PC-9 (cell line): ENCODE measurements at regions of chr17 and their contacts with region 1.

Region 1: GRCh38 chr17:44775136-44775837 is 16.5 kb downstream of the ADAM11 start:
- DNase-seq: peak in 1 of 2 experiments; percentile 95
- H3K4me3 ChIP-seq: peak overlapping the region; percentile 81
- H3K27ac ChIP-seq: no peak overlapping the region
- H3K4me1 ChIP-seq: peaks cover 8% of the 10 kb centered on the region; the same call in 1 of the 2 replicates
- H3K27me3 ChIP-seq: no peaks in the 10 kb centered on the region
- CTCF ChIP-seq: peak; percentile 21; the same call in 1 of the 2 replicates

Region 2: GRCh38 chr17:44417553-44417952 is 357.7 kb before region 1 on chr17:
- CTCF ChIA-PET with region 1: no interaction called
- POLR2A ChIA-PET with region 1: no interaction called
- intact Hi-C with region 1: no loop called
- DNase-seq: peak; percentile 34 to 86
- H3K4me3 ChIP-seq: no peak overlapping the region
- H3K27ac ChIP-seq: peak overlapping the region; percentile 71
- H3K4me1 ChIP-seq: peaks cover 16% of the 10 kb centered on the region
- H3K27me3 ChIP-seq: no peaks in the 10 kb centered on the region
- CTCF ChIP-seq: no peak

Region 3: DNA sequence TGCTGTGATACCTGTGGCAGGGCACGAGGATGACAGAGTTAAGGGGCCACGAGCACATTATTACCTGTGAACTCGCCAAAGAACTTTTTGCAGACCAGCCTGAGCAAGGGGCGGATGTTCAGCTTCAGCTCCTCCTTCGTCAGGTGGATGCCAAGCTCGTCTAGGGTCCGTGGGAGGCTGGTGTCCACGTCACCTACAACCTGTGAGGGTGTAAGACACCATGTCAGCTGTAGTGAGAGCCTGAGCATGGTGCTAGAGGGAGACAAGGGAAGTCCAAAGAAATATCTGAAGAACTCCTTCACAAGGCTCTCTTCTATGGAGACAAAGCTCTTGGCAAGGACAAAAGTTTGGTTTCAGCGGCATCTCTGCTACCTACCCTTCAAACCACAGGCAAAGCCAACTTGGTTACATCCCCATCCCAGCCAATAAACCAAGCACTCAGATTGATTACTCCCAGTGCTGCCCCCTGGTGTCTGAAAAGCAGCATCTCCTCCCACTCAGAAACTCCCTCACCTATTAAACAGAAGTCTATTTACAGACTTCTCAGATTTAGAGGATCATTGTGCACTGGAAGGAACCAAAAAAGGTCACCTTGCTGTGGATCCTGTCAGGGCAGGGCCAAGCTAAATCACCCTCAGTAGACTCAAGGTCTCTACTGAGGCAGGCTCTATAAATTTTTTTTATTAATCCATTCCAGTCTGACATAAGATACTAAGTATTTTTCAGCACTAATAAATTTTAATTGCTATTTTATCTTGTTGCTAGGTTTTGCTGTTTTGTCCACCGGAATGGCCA is 89.8 kb after region 1 on chr17:
- CTCF ChIA-PET with region 1: interaction called, 3 read pairs
- POLR2A ChIA-PET with region 1: no interaction called
- intact Hi-C with region 1: loop called (anchors 1 kb)
- DNase-seq: peak; percentile 47
- H3K4me3 ChIP-seq: no peak overlapping the region
- H3K27ac ChIP-seq: no peak overlapping the region
- H3K4me1 ChIP-seq: no peaks in the 10 kb centered on the region
- H3K27me3 ChIP-seq: no peaks in the 10 kb centered on the region
- CTCF ChIP-seq: peak; percentile 92

Region 4: GRCh38 chr17:45029096-45029495 is 253.8 kb after region 1 on chr17:
- CTCF ChIA-PET with region 1: interaction called, 24 read pairs
- POLR2A ChIA-PET with region 1: no interaction called
- intact Hi-C with region 1: no loop called
- DNase-seq: no peak
- H3K4me3 ChIP-seq: no peak overlapping the region
- H3K27ac ChIP-seq: no peak overlapping the region
- H3K4me1 ChIP-seq: no peaks in the 10 kb centered on the region
- H3K27me3 ChIP-seq: no peaks in the 10 kb centered on the region
- CTCF ChIP-seq: no peak